HCT116 (cell line): ENCODE measurements at regions of chr9 and their contacts with region 1.

Region 1: GRCh38 chr9:6498982-6499381 is 86.0 kb downstream of the UHRF2 start:
- DNase-seq: no peak
- ATAC-seq: no peak
- H3K4me3 ChIP-seq: no peak overlapping the region
- H3K27ac ChIP-seq: no peak overlapping the region
- H3K4me1 ChIP-seq: no peaks in the 10 kb centered on the region
- H3K27me3 ChIP-seq: no peaks in the 10 kb centered on the region
- CTCF ChIP-seq: no peak
- POLR2A ChIP-seq: no peak
- RAD21 ChIP-seq: no peak

Region 2: GRCh38 chr9:6355728-6356127 is 143.3 kb before region 1 on chr9:
- CTCF ChIA-PET with region 1: no interaction called
- POLR2A ChIA-PET with region 1: no interaction called
- RAD21 ChIA-PET with region 1: no interaction called
- intact Hi-C with region 1: no loop called
- DNase-seq: no peak
- ATAC-seq: no peak
- H3K4me3 ChIP-seq: no peak overlapping the region
- H3K27ac ChIP-seq: no peak overlapping the region
- H3K4me1 ChIP-seq: peaks cover 0 to 5% of the 10 kb centered on the region in 2 experiments; a peak in 1 of 4 replicates
- H3K27me3 ChIP-seq: no peaks in the 10 kb centered on the region
- CTCF ChIP-seq: no peak
- POLR2A ChIP-seq: no peak
- RAD21 ChIP-seq: no peak

Region 3: GRCh38 chr9:6512085-6512657 is 13.2 kb after region 1 on chr9:
- CTCF ChIA-PET with region 1: no interaction called
- POLR2A ChIA-PET with region 1: no interaction called
- RAD21 ChIA-PET with region 1: no interaction called
- intact Hi-C with region 1: loop called (anchors 2 kb)
- DNase-seq: no peak
- ATAC-seq: no peak
- H3K4me3 ChIP-seq: no peak overlapping the region
- H3K27ac ChIP-seq: no peak overlapping the region
- H3K4me1 ChIP-seq: no peaks in the 10 kb centered on the region
- H3K27me3 ChIP-seq: no peaks in the 10 kb centered on the region
- CTCF ChIP-seq: no peak
- POLR2A ChIP-seq: no peak
- RAD21 ChIP-seq: no peak

Region 4: DNA sequence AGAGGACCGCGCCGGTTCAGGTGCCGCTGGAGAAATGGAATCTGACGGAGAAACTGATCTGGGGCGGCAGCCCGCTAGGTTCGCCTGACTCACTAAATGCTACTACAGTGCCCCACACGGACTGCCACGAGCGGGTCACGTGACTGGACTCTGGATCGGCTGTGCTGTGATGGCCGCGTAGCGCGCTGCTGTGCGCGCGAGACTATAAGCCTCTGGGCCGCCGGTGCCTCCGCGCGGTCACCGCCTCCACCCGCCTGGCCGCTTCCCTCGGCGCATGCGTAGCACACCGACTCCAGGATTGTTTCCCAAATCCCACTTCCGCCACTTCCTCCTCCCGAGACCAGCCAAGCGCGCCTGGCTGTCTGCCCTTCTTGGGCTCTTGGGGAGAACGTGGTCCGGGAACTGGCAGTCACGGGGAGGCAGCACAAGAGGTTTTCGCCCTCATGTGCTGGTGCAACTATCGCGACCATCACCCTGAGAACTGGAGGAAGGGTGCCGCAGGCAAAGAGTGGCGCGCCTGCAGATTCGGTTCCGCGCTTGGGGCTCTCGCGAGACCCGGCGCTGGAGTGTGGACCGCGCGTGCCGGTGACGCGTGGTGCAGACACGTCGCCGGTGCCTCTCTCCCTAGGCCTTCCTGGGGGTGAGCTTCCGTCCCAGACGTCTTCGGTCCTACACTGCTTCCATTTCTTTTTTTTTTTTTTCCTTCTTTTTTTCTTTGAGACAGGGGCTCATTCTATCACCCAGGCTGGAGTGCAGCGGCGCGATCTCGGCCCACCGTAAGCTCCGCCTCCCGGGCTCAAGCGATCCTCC is 182.4 kb after region 1 on chr9:
- CTCF ChIA-PET with region 1: no interaction called
- POLR2A ChIA-PET with region 1: no interaction called
- RAD21 ChIA-PET with region 1: no interaction called
- intact Hi-C with region 1: no loop called
- DNase-seq: peak; percentile 95
- ATAC-seq: peak; percentile 91
- H3K4me3 ChIP-seq: peak overlapping the region; percentile 91 to 92
- H3K27ac ChIP-seq: peak overlapping the region; percentile 99
- H3K4me1 ChIP-seq: peaks cover 6 to 22% of the 10 kb centered on the region in 2 experiments; a peak in 3 of 4 replicates
- H3K27me3 ChIP-seq: no peaks in the 10 kb centered on the region
- CTCF ChIP-seq: no peak
- POLR2A ChIP-seq: peak; percentile 87
- RAD21 ChIP-seq: no peak